ENCODE measurements at regions of chr15 and their contacts with region 1.

Region 1: DNA sequence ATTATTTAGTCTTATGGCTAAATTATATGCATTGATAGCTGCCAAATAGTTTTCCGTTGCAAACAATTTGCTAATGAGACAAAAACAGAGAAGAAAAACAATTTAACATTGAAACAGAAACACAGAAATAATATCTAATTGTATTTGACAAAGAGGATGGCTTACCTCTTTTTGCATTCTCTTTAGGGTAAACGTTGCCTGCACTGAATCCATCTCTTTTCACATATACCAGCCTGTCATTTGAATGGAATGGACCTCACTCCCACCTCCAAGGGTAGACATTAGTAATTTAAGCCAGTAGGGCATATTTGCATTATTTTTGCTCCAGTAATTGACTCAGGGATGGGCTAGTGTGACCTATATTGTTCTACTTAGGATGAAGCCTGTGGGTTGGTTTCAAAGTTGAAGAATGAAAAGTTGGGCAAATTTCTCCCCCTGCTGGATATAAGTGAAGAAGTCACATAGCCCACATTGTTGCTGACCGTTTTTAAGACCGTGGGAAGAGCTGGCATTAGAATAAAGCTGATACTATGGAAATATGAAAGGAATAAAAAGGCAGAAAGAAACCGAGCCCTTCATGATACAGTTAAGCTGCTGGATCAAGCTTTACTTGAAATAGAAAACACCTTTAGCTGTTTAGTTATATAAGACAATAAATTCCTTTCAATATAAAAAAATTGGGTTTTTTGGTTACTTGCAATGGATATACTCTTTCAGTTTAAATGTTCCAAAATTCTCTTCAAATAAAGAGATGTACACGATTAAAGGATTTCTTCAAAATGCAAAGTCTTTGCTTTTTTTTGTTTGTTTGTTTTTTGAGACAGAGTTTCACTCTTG is 26.9 kb downstream of the PIERCE2 start:
- ATAC-seq: peak; percentile 44 to 98 (median 70)
- H3K4me3 ChIP-seq: no peak overlapping the region
- H3K27ac ChIP-seq: no peak overlapping the region
- H3K4me1 ChIP-seq: peaks cover 0 to 4% of the 10 kb centered on the region in 2 donors

Region 2: GRCh38 chr15:55221090-55222011 is 213.9 kb before region 1 on chr15:
- in situ Hi-C with region 1: loop called in 3 of 9 experiments (anchors 10 to 25 kb)
- ATAC-seq: peak in 4 of 8 experiments; percentile 43 to 87 (median 76)
- H3K4me3 ChIP-seq: no peak overlapping the region
- H3K27ac ChIP-seq: no peak overlapping the region
- H3K4me1 ChIP-seq: peaks cover 0 to 2% of the 10 kb centered on the region in 2 donors

Region 3: GRCh38 chr15:55344206-55344605 is 91.0 kb before region 1 on chr15:
- in situ Hi-C with region 1: loop called in 1 of 9 experiments (anchors 25 kb)
- ATAC-seq: peak; percentile 38 to 91 (median 82)
- H3K4me3 ChIP-seq: no peak overlapping the region
- H3K27ac ChIP-seq: peak overlapping the region in 1 of 2 donors; percentile 18
- H3K4me1 ChIP-seq: peaks cover 14% of the 10 kb centered on the region in 2 donors